Activated T-helper 2 cell treated with anti-CD3 and anti-CD28 coated beads, Interferon-gamma antibody, Interleukin-2, Interleukin-4, amounts not matched to agents 10 μg/mL and 5 μg/mL and 100 μg/mL, durations not matched to agents 14 hours and 24 hours and 36 hours (primary cell): ENCODE measurements at regions of chr10 and their contacts with region 1.

Region 1: DNA sequence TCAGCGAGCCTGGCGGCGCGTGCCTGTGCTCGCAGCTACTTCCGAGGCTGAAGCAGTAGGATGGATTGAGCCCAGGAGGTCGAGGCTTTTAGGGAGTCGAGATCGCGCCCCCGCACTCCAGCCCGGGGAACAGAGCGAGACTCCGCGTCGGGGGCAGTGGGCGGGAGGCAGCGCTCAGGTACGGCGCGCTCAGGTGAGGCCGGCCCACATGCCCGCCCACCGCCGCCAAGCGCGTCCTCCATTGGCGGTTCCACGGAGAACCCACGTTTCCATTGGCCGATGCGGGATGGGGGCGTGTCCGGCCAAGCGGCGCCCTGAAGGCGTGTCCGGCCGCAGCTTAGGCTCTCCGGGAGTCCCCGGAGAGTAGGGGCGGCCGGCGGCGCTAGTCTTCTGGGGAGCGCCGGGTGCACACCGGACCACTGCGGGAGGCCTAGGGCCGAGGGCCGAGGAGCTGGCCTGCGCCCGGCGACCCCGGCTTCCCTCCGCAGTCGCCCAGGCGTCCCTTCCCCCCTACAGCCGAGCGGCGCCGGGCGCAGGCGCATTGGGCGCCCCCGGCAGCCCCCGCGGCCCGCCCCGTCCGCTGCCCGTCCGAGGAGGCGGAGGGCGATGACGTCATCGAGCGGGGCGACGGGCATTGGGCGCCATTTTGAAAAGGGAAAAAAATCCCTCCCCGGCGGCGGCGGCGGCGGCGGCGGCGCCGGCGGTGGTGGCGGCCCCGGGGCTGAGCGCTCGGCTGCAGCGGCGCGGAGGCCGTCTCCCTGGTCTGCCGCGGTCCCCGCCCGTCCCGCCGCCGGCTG is at the start of gene PPP2R2D:
- DNase-seq: peak; percentile 94
- H3K4me3 Mint-ChIP-seq: peak within 1 kb of the TSS; percentile 86
- H3K27ac Mint-ChIP-seq: peak within 1 kb of the TSS; percentile 73
- H3K4me1 Mint-ChIP-seq: peaks cover 49% of the 10 kb centered on the region
- H3K27me3 Mint-ChIP-seq: peaks cover 13% of the 10 kb centered on the region
- total RNA-seq, gene PPP2R2D: 32.0 and 33.7 TPM in 2 replicates

Region 2: DNA sequence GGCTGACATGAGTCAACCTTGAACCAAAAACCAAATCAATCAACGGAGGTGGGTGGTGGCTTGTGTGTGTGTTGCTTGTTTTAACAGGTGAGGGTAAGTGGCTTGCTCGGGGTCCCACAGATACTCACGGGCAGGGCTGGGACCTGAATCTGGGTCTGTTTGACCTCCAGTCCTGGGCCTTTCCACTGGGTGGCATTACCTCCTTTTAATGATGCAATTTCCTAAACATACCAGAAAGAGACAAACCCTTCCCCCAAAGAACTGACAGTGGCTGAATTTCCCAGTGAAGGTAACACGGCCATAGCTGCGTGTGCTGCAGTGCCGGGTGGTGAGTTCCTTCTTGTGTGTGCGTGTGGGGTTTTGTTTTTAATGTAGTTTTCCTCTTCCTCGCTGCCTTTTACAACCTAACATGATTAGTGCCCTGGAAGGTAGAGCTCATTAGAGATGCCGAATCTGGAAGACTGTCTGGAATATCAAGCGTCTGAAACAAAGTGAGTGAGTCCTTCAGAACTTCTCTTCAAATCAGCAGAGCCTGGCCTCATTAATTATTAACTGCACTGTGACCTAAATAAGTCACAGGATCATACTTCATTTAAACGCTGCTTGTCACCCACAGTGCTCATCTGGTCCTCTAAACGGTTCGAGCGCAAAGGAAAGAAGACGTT is 423.0 kb before region 1 on chr10:
- intact Hi-C with region 1: no loop called
- DNase-seq: no peak
- H3K4me3 Mint-ChIP-seq: no peak overlapping the region
- H3K27ac Mint-ChIP-seq: no peak overlapping the region
- H3K4me1 Mint-ChIP-seq: no peaks in the 10 kb centered on the region
- H3K27me3 Mint-ChIP-seq: no peaks in the 10 kb centered on the region

Region 3: GRCh38 chr10:131928248-131929095 is 27.9 kb after region 1 on chr10:
- intact Hi-C with region 1: loop called (anchors 1 kb)
- DNase-seq: no peak
- H3K4me3 Mint-ChIP-seq: peak overlapping the region; percentile 11
- H3K27ac Mint-ChIP-seq: peak overlapping the region; percentile 85
- H3K4me1 Mint-ChIP-seq: peaks cover 47% of the 10 kb centered on the region
- H3K27me3 Mint-ChIP-seq: no peaks in the 10 kb centered on the region

Region 4: GRCh38 chr10:131981429-131982184 is 81.1 kb after region 1 on chr10 and contains the start of gene BNIP3:
- intact Hi-C with region 1: loop called (anchors 1 kb)
- DNase-seq: peak; percentile 90
- H3K4me3 Mint-ChIP-seq: peak within 1 kb of the TSS; percentile 90
- H3K27ac Mint-ChIP-seq: peak within 1 kb of the TSS; percentile 49
- H3K4me1 Mint-ChIP-seq: peaks cover 40% of the 10 kb centered on the region
- H3K27me3 Mint-ChIP-seq: peaks cover 12% of the 10 kb centered on the region
- total RNA-seq, gene BNIP3: 93.3 and 99.0 TPM in 2 replicates

Region 5: GRCh38 chr10:132158122-132158741 is 257.7 kb after region 1 on chr10:
- intact Hi-C with region 1: loop called (anchors 5 kb)
- DNase-seq: peak; percentile 52
- H3K4me3 Mint-ChIP-seq: no peak overlapping the region
- H3K27ac Mint-ChIP-seq: peak overlapping the region; percentile 65
- H3K4me1 Mint-ChIP-seq: peaks cover 29% of the 10 kb centered on the region
- H3K27me3 Mint-ChIP-seq: no peaks in the 10 kb centered on the region

Region 6: GRCh38 chr10:132331526-132332432 is 431.2 kb after region 1 on chr10 and contains the start of gene LRRC27:
- intact Hi-C with region 1: loop called (anchors 5 kb)
- DNase-seq: peak; percentile 99
- H3K4me3 Mint-ChIP-seq: peak within 1 kb of the TSS; percentile 83
- H3K27ac Mint-ChIP-seq: peak within 1 kb of the TSS; percentile 91
- H3K4me1 Mint-ChIP-seq: peaks cover 49% of the 10 kb centered on the region
- H3K27me3 Mint-ChIP-seq: no peaks in the 10 kb centered on the region
- total RNA-seq, gene LRRC27: 2.8 and 3.5 TPM in 2 replicates